Mammary epithelial cell (primary cell): ENCODE measurements at regions of chr1 and their contacts with region 1.

Region 1: GRCh38 chr1:174769961-174770549 is 229.7 kb upstream of the CACYBP start:
- DNase-seq: peak; percentile 34
- H3K4me3 ChIP-seq: no peak overlapping the region
- H3K27ac ChIP-seq: no peak overlapping the region
- H3K4me1 ChIP-seq: no peaks in the 10 kb centered on the region
- H3K27me3 ChIP-seq: no peaks in the 10 kb centered on the region
- CTCF ChIP-seq: peak; percentile 68 to 72

Region 2: DNA sequence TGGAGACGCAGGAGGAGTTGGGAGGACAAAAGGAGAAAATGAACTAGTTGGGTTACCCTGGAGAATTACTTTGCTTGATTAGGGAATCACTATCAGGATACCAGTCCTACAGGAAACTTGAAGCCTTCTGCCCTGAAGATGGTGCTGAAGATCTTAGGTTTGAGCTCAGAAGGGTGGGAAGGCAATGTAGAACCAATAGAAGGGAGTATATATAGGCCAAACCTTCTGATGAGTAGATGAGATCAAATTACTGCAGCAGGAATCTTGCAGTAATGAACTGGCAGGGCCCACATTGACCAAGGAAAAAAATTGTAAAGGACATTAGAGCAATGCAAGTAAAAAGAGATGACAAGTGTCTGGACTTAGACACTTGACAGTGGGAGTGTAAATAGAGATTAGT is 113.4 kb after region 1 on chr1:
- CTCF ChIA-PET with region 1: no interaction called
- dilution Hi-C with region 1: no loop called
- in situ Hi-C with region 1: no loop called
- intact Hi-C with region 1: loop called (anchors 2 kb)
- DNase-seq: peak; percentile 50
- H3K4me3 ChIP-seq: no peak overlapping the region
- H3K27ac ChIP-seq: no peak overlapping the region
- H3K4me1 ChIP-seq: no peaks in the 10 kb centered on the region
- H3K27me3 ChIP-seq: no peaks in the 10 kb centered on the region
- CTCF ChIP-seq: no peak

Region 3: DNA sequence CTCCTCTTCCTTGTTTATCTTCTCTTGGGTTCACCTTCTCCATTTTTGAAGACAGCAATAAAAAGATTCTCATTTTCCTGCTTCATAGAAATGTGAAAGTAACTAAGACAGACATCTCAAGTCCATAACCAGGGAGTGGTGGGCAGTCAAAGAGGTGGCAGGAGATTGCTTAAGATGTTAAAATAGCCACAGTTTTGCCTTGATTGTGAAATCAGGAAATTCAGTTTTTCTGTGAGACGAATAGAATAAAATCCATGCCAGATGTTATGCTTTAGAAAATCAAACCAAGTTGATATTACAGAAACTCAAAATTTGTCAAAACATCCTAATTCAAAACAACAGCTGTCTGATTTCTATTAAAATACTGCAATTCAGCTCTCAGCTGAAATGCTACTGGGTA is 354.8 kb after region 1 on chr1:
- CTCF ChIA-PET with region 1: no interaction called
- dilution Hi-C with region 1: no loop called
- in situ Hi-C with region 1: no loop called
- intact Hi-C with region 1: loop called (anchors 2 kb)
- DNase-seq: no peak
- H3K4me3 ChIP-seq: no peak overlapping the region
- H3K27ac ChIP-seq: no peak overlapping the region
- H3K4me1 ChIP-seq: peaks cover 4% of the 10 kb centered on the region
- H3K27me3 ChIP-seq: no peaks in the 10 kb centered on the region
- CTCF ChIP-seq: no peak